ENCODE measurements at regions of chr12 and their contacts with region 1.

Region 1: GRCh38 chr12:32821710-32822109 is 66.0 kb upstream of the YARS2 start:
- DNase-seq: no peak
- H3K4me3 Mint-ChIP-seq: no peak overlapping the region
- H3K27ac Mint-ChIP-seq: no peak overlapping the region
- H3K4me1 Mint-ChIP-seq: peaks cover 6% of the 10 kb centered on the region
- H3K27me3 Mint-ChIP-seq: no peaks in the 10 kb centered on the region
- CTCF ChIP-seq: no peak

Region 2: GRCh38 chr12:32761716-32762115 is 60.0 kb before region 1 on chr12:
- CTCF ChIA-PET with region 1: no interaction called
- intact Hi-C with region 1: loop called (anchors 10 kb)
- DNase-seq: no peak
- H3K4me3 Mint-ChIP-seq: no peak overlapping the region
- H3K27ac Mint-ChIP-seq: no peak overlapping the region
- H3K4me1 Mint-ChIP-seq: peaks cover 2% of the 10 kb centered on the region
- H3K27me3 Mint-ChIP-seq: no peaks in the 10 kb centered on the region
- CTCF ChIP-seq: no peak

Region 3: DNA sequence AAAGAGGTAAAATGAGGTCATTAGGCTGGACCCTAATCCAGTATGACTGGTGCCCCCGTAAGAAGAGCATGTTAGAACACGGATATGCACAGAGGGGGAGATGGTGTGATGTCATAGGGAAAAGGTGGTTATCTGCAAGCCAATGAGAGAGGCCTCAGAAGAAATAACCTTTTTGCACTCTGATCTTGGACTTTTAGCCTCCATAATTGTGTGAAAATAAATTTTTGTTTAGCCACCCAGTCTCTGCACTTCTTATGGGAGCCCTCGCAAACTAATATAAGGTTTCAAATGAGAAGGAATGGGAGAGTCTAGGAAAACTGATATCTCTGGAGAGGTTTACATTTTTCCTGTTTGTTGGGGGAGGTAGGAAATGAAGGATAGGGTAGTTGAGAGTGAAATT is 118.1 kb after region 1 on chr12:
- CTCF ChIA-PET with region 1: no interaction called
- intact Hi-C with region 1: no loop called
- DNase-seq: no peak
- H3K4me3 Mint-ChIP-seq: no peak overlapping the region
- H3K27ac Mint-ChIP-seq: no peak overlapping the region
- H3K4me1 Mint-ChIP-seq: peaks cover 7% of the 10 kb centered on the region
- H3K27me3 Mint-ChIP-seq: no peaks in the 10 kb centered on the region
- CTCF ChIP-seq: no peak

Region 4: GRCh38 chr12:32964981-32965585 is 143.4 kb after region 1 on chr12:
- CTCF ChIA-PET with region 1: no interaction called
- intact Hi-C with region 1: no loop called
- DNase-seq: no peak
- H3K4me3 Mint-ChIP-seq: no peak overlapping the region
- H3K27ac Mint-ChIP-seq: no peak overlapping the region
- H3K4me1 Mint-ChIP-seq: no peaks in the 10 kb centered on the region
- H3K27me3 Mint-ChIP-seq: no peaks in the 10 kb centered on the region
- CTCF ChIP-seq: no peak